A673 (cell line): ENCODE measurements at regions of chr11 and their contacts with region 1.

Region 1: DNA sequence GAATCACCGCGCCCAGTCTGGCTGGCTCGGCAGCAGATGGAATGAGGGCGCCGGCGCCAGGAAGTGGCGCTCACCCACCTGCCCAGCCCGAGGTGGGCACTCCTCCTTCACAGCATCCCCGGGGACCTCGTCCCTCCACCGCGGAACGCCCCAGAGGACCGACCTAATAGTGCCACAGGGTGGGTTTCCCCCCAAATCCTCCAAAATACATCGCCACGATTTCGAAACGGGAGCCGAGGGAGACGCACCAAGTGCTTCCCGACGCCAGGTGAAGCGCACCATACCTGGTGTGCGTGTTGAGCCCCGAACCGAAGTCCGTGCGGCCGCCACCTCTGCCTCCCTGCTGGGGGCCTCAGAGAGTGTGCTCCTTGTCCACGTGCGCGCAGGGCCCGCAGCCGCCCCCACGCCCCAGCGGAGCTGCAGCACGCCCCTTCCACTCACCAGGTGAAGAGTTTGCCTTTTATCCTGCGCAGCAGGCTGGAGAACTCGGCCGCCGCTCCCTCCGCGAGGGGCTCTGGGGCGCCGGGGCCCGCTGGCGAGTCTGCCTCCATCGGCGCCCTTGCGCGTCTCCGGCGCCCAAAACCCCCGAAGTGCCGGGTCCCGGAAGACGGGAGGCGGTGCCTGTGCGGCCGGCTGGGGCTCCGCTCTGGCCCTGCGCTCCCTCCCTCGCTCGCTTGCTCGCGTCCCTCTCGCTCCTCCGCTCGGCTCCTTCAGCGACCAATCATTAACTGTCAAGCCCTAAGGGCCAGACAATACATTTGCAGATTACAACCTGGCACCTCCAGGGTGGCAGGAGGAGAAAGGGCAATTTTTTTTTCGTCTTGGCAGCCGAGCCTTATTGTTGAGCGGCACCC is at the start of gene SLC35F2:
- DNase-seq: peak; percentile 92
- H3K4me3 ChIP-seq: peak within 1 kb of the TSS; percentile 73
- H3K27ac ChIP-seq: peak within 1 kb of the TSS; percentile 74
- H3K4me1 ChIP-seq: peaks cover 19% of the 10 kb centered on the region
- H3K27me3 ChIP-seq: no peaks in the 10 kb centered on the region
- CTCF ChIP-seq: no peak
- total RNA-seq, gene SLC35F2: 80.8 and 95.4 TPM in 2 replicates

Region 2: GRCh38 chr11:107799218-107799859 is 59.1 kb before region 1 on chr11:
- CTCF ChIA-PET with region 1: no interaction called
- POLR2A ChIA-PET with region 1: no interaction called
- intact Hi-C with region 1: loop called (anchors 5 kb)
- DNase-seq: peak; percentile 77
- H3K4me3 ChIP-seq: no peak overlapping the region
- H3K27ac ChIP-seq: no peak overlapping the region
- H3K4me1 ChIP-seq: no peaks in the 10 kb centered on the region
- H3K27me3 ChIP-seq: no peaks in the 10 kb centered on the region
- CTCF ChIP-seq: peak; percentile 94

Region 3: DNA sequence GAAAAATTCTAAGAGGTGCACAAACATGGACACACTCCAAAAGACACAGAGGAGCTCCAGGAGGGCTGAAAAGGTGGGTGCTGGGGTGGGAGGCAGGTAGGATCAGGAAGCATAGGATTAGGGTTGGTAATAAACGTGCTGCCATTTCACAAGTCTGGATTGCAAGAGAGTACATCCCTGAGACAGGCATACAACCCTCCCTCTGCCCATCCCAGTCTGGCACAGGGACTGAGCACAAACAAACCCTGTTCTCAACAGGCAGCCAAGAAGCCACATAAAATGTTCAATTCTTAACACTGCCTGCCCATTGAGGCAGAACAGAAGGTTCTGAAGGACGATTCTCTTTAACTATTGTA is 18.3 kb before region 1 on chr11:
- CTCF ChIA-PET with region 1: interaction called, 11 read pairs
- POLR2A ChIA-PET with region 1: interaction called, 6 read pairs
- intact Hi-C with region 1: loop called (anchors 2 kb)
- DNase-seq: no peak
- H3K4me3 ChIP-seq: peak overlapping the region; percentile 29
- H3K27ac ChIP-seq: peak overlapping the region; percentile 93
- H3K4me1 ChIP-seq: peaks cover 40% of the 10 kb centered on the region
- H3K27me3 ChIP-seq: no peaks in the 10 kb centered on the region
- CTCF ChIP-seq: no peak

Region 4: DNA sequence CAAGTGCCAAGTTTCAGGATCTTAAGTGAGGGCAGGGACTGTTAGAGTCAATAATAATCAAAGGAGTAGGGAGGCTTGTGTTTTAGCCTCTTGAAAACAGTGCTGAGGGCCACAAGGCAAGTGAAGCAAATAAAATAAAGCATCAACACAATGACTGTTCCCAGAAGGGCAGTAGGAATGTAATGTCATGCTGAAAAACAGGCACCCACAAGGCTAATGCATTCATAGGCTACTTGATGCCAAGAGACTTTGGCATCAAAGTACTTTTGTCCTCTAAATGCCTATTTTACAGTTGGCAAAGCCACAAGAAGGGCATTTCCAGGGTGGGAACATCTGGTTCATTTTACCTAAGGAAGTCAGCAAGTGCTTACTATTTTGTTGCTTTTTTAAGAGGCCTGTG is 92.7 kb after region 1 on chr11:
- CTCF ChIA-PET with region 1: no interaction called
- POLR2A ChIA-PET with region 1: no interaction called
- intact Hi-C with region 1: no loop called
- DNase-seq: no peak
- H3K4me3 ChIP-seq: no peak overlapping the region
- H3K27ac ChIP-seq: no peak overlapping the region
- H3K4me1 ChIP-seq: peaks cover 2% of the 10 kb centered on the region
- H3K27me3 ChIP-seq: no peaks in the 10 kb centered on the region
- CTCF ChIP-seq: no peak

Region 5: DNA sequence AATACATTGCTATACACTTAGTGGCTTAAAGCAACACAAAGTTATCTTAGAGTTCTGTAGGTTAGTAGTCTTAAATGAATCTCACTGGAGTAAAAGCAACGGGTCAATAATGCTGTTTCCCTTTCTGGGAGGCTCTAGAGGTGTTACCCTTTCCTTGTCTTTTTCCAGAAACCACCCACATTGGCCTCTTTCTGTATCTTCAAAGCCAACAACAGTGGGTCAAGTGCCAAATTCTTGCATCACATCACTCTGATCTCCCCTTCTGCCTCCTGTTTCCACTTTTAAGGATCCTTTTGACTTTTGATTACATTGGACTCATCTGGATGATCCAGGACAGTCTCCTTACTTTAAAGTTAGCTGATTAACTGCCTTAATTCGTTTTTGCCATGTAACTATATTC is 900.0 kb after region 1 on chr11:
- CTCF ChIA-PET with region 1: no interaction called
- POLR2A ChIA-PET with region 1: no interaction called
- intact Hi-C with region 1: no loop called
- DNase-seq: no peak
- H3K4me3 ChIP-seq: no peak overlapping the region
- H3K27ac ChIP-seq: no peak overlapping the region
- H3K4me1 ChIP-seq: peaks cover 41% of the 10 kb centered on the region
- H3K27me3 ChIP-seq: no peaks in the 10 kb centered on the region
- CTCF ChIP-seq: no peak